Activated T-helper 1 cell treated with anti-CD3 and anti-CD28 coated beads, Interleukin-12 subunit alpha, Interleukin-12 subunit beta, Interleukin-2, Interleukin-4 antibody, amounts not matched to agents 30 ng/mL and 10 ng/mL and 1 ng/mL, durations not matched to agents 14 hours and 24 hours and 36 hours (primary cell): ENCODE measurements at regions of chr4 and their contacts with region 1.

Region 1: GRCh38 chr4:164948975-164949374 is 28.5 kb downstream of the TRIM61 start:
- DNase-seq: no peak
- H3K4me3 Mint-ChIP-seq: no peak overlapping the region
- H3K27ac Mint-ChIP-seq: no peak overlapping the region
- H3K4me1 Mint-ChIP-seq: no peaks in the 10 kb centered on the region
- H3K27me3 Mint-ChIP-seq: peaks cover 4% of the 10 kb centered on the region

Region 2: GRCh38 chr4:164301430-164301829 is 647.5 kb before region 1 on chr4:
- intact Hi-C with region 1: no loop called
- DNase-seq: no peak
- H3K4me3 Mint-ChIP-seq: no peak overlapping the region
- H3K27ac Mint-ChIP-seq: no peak overlapping the region
- H3K4me1 Mint-ChIP-seq: no peaks in the 10 kb centered on the region
- H3K27me3 Mint-ChIP-seq: no peaks in the 10 kb centered on the region

Region 3: DNA sequence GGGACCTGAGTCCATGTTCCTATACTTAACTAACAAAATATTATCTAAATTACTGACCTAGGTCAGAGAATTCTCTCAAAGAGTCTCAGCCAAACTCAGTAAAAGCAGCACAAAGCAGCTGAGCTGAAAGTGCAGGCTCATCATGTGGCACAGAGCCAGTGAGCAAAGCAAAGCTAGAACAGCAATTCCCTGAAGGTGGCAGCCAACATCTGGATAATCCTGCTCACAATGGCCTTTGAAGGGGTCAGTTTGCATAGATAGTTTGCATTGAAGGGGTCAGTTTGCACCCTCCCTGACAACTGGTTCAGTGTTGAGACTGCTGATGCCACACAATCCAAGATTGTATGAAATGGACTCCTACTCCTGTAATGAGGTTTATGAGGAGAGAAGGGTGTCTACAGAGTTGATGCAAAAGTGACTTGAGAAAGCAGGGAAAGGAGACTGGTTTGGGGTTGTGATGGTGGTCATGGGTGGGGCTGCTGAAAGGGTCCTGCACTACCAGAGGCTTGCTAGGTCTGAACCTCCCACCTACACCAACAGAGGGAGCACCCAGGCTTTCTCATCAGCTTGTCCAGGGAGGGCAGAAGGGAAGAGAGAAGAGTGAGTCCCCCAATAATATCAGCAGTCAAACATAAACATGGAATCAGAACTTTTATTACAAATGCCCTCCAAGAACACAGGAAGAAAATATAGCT is 11.3 kb before region 1 on chr4:
- intact Hi-C with region 1: loop called (anchors 1 kb)
- DNase-seq: no peak
- H3K4me3 Mint-ChIP-seq: no peak overlapping the region
- H3K27ac Mint-ChIP-seq: no peak overlapping the region
- H3K4me1 Mint-ChIP-seq: no peaks in the 10 kb centered on the region
- H3K27me3 Mint-ChIP-seq: peaks cover 18% of the 10 kb centered on the region